BJ (cell line): ENCODE measurements at regions of chr1 and their contacts with region 1.

Region 1: GRCh38 chr1:35726450-35727433 is 8.1 kb upstream of the C1orf216 start:
- DNase-seq: no peak
- H3K4me3 ChIP-seq: no peak overlapping the region
- H3K27me3 ChIP-seq: no peaks in the 10 kb centered on the region
- CTCF ChIP-seq: peak; percentile 89

Region 2: DNA sequence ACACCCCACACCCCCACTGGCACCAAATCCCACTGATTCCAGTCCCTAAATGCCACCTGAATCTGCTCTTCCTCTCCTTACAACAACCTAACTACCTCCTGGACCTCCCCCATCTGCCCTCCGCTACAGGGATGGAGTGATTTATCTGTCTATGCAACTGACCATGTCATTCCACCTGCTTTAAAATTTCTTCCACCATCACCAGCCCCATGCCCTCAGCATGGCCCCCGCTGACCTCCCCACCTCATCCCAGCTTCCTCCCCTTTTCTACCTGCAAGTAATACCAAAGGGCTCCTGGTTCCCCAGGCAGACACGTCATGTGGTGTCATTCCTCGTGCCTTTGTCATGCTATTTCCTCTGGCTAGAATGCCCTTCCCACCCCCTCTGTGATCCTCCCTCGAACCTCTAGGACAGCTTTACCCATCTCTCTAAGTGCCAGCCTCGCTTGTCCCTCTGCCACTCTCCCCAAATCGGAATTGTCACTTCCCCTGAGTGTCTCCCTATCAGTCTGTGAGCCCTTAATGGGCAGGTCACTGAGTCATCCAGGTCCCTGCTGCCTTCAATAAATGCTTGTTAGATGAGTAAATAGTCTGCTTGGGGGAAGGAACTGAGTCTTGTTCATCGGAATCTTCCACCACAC is 963.5 kb before region 1 on chr1:
- CTCF ChIA-PET with region 1: no interaction called
- POLR2A ChIA-PET with region 1: no interaction called
- DNase-seq: no peak
- H3K4me3 ChIP-seq: no peak overlapping the region
- H3K27me3 ChIP-seq: no peaks in the 10 kb centered on the region; the same call in none of the 2 replicates
- CTCF ChIP-seq: no peak

Region 3: GRCh38 chr1:35451125-35451528 is 275.6 kb before region 1 on chr1:
- CTCF ChIA-PET with region 1: interaction called, 31 read pairs
- POLR2A ChIA-PET with region 1: no interaction called
- DNase-seq: no peak
- H3K4me3 ChIP-seq: no peak overlapping the region
- H3K27me3 ChIP-seq: no peaks in the 10 kb centered on the region
- CTCF ChIP-seq: peak; percentile 87

Region 4: DNA sequence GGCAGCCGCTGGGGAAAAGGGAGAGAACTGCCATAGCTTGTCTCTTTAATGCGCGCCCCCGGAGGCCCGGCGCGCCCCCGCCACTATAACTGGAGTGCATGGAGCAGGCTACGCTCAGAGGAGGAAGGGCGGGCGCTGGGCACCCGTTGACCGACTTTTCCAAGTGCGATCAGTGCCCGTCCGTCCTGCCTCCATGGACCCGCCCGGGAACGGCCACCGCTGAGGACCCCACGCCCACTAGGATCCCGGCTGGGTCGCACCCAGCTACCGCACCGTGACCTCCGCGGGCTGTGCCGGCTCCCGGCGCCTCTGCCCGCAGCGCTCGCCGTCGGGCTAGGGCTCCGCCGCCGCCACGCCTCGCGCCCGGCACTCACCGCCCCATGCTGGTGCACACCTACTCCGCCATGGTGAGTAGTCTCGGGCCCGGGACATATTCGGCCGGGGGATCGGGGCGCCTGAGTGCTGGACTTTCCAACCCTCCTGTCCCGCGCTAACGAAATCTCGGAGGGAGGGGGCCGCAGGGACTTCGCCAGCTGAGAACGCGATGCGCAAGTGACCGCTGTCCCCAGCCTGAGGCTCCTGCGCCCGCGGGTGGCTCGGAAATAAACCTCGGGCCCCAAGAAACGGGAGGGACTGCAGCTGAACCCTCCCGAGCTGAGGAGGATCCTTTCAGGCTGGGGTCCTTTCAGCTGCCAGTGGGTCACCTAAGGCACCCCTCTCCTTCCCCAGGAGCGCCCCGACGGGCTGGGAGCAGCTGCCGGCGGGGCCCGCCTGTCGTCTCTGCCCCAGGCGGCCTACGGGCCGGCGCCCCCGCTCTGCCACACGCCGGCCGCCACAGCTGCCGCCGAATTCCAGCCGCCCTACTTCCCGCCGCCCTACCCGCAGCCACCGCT is 153.3 kb before region 1 on chr1 and contains the start of gene TFAP2E:
- CTCF ChIA-PET with region 1: interaction called, 105 read pairs
- POLR2A ChIA-PET with region 1: no interaction called
- DNase-seq: no peak
- H3K4me3 ChIP-seq: peak within 1 kb of the TSS; percentile 55
- H3K27me3 ChIP-seq: peaks cover 2% of the 10 kb centered on the region; the same call in 1 of the 2 replicates
- CTCF ChIP-seq: no peak
- polyA plus RNA-seq, gene TFAP2E: 0.07 and 0.13 TPM in 2 replicates

Region 5: DNA sequence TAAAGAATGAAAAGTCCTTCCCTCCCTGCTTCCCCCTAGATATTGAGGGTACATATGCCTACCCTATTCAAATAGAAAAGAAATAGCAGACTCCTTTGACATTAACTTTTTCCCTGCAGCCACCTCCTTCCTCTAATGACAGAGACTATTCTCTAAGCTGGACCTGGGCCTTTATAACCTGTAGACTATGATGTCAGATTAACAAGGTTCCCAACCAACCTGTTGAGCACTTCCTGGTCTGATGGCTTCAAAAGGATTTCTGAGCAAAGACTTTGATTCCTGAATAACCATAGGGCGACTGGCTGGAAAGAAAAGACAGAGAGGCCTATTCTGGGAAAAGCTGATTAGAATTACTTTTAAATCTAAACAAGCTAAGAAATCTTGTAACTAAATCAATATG is 10.4 kb after region 1 on chr1:
- CTCF ChIA-PET with region 1: interaction called, 44 read pairs
- POLR2A ChIA-PET with region 1: no interaction called
- DNase-seq: no peak
- H3K4me3 ChIP-seq: no peak overlapping the region
- H3K27me3 ChIP-seq: no peaks in the 10 kb centered on the region
- CTCF ChIP-seq: no peak

Region 6: DNA sequence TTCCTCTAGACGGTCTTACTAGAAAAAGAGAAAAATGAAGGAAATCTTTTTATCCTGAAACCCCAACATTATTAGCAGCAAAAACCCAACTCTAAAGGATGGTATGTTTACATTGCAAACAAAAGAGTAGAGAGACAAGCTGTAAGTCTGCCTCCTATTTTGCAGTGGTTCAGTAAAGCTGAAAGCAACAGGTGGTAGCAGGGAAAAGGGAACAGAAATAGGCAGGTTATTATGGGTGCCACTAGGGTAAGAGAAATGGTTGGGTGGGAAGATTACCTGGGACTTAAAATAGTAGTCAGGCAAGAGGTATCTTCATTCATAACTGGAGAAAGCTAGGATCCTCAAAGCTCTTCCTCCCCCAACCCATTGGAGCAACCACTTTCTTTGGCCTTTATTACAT is 29.3 kb after region 1 on chr1:
- CTCF ChIA-PET with region 1: interaction called, 12 read pairs
- POLR2A ChIA-PET with region 1: no interaction called
- DNase-seq: no peak
- H3K4me3 ChIP-seq: no peak overlapping the region
- H3K27me3 ChIP-seq: no peaks in the 10 kb centered on the region
- CTCF ChIP-seq: no peak